Tibial artery (tissue), 4 donors: ENCODE measurements at regions of chr3 and their contacts with region 1.

Region 1: DNA sequence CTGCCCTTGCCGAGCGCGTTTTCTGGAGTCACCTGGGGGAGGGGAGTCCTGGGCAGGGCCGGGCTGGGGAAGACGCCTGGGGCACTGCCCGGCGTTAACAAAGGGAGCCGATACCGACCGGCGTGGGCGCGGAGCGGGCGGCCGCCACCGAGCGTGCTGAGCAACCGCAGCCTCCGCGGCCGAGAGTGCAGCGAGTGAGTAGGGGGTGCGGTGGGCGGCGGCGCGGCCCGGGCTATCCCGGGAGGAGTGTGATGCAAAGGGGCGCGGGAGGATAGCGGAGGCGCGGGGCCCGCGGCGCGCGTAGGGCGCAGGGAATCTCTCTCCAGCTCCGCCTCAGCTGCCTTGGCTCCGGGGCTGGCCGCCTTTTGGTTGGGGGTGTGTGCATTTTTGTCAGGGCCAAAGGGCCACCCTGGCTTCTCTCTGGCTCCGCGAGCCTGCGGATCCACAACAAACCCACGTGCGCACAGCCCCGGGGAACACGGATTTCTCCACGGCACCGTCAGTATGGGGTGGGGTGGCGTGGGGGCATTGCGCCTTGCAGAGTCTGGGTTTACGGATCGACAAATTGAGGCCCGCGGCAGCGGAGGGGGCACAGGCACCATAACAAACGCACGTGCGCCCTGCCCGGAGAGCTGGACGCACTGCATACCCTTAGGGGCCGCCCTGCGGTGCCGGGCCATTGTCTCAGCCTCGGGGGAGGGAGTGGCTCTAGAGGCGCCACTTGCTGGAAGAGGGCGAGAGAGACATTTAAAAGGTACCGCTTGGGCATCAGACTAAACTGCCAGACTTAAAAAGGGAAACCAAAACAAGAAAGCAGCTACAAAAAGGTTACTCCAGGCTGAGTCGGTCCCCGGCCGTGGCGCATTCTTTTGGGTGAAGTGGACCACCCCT is 560 bp downstream of the ST6GAL1 start:
- DNase-seq: peak; percentile 69 to 84
- H3K4me3 ChIP-seq: peak overlapping the region; percentile 82 to 91
- H3K27ac ChIP-seq: peak overlapping the region; percentile 85 to 93
- H3K4me1 ChIP-seq: peaks cover 0 to 32% (median 26%) of the 10 kb centered on the region in 4 donors
- H3K27me3 ChIP-seq: no peaks in the 10 kb centered on the region
- CTCF ChIP-seq: no peak

Region 2: DNA sequence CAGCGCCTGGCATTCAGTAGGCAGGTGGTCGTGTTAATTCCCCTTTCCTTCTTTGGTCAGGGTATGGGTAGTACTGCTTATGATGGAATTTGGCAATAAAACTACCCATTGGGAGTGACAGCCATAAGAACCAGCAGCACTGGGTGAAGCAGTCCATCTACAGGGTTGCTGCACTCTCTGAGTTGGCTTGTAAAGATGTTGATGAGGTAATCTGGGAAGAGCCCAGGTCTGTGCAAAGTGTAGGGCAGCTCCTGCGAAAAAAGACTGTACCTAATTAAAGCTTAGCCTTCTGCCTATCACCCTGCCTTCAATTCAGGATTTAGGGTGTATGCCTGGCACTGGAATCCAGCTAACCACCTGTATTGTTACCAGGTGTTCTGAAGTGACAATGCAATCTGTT is 295.4 kb before region 1 on chr3:
- intact Hi-C with region 1: no loop called
- DNase-seq: no peak
- H3K4me3 ChIP-seq: no peak overlapping the region
- H3K27ac ChIP-seq: no peak overlapping the region
- H3K4me1 ChIP-seq: peaks cover 0 to 6% (median 2%) of the 10 kb centered on the region in 4 donors
- H3K27me3 ChIP-seq: peaks cover 0 to 7% of the 10 kb centered on the region in 2 donors
- CTCF ChIP-seq: no peak

Region 3: GRCh38 chr3:186826976-186827731 is 103.7 kb before region 1 on chr3:
- intact Hi-C with region 1: loop called (anchors 10 kb)
- DNase-seq: peak; percentile 49 to 86
- H3K4me3 ChIP-seq: peak overlapping the region; percentile 65 to 93
- H3K27ac ChIP-seq: peak overlapping the region; percentile 68 to 70
- H3K4me1 ChIP-seq: peaks cover 0 to 18% (median 10%) of the 10 kb centered on the region in 4 donors
- H3K27me3 ChIP-seq: peaks cover 0 to 34% of the 10 kb centered on the region in 2 donors
- CTCF ChIP-seq: peak in 1 of 2 experiments; percentile 16

Region 4: GRCh38 chr3:186976837-186977750 is 46.2 kb after region 1 on chr3:
- intact Hi-C with region 1: loop called (anchors 5 kb)
- DNase-seq: peak; percentile 91 to 96
- H3K4me3 ChIP-seq: peak overlapping the region; percentile 17 to 24
- H3K27ac ChIP-seq: peak overlapping the region; percentile 80 to 88
- H3K4me1 ChIP-seq: peaks cover 4 to 64% (median 51%) of the 10 kb centered on the region in 4 donors
- H3K27me3 ChIP-seq: no peaks in the 10 kb centered on the region
- CTCF ChIP-seq: peak; percentile 28 to 42

Region 5: GRCh38 chr3:187000711-187001151 is 69.8 kb after region 1 on chr3:
- intact Hi-C with region 1: no loop called
- DNase-seq: no peak
- H3K4me3 ChIP-seq: no peak overlapping the region
- H3K27ac ChIP-seq: no peak overlapping the region
- H3K4me1 ChIP-seq: peaks cover 0 to 44% (median 5%) of the 10 kb centered on the region in 4 donors
- H3K27me3 ChIP-seq: no peaks in the 10 kb centered on the region
- CTCF ChIP-seq: no peak

Region 6: DNA sequence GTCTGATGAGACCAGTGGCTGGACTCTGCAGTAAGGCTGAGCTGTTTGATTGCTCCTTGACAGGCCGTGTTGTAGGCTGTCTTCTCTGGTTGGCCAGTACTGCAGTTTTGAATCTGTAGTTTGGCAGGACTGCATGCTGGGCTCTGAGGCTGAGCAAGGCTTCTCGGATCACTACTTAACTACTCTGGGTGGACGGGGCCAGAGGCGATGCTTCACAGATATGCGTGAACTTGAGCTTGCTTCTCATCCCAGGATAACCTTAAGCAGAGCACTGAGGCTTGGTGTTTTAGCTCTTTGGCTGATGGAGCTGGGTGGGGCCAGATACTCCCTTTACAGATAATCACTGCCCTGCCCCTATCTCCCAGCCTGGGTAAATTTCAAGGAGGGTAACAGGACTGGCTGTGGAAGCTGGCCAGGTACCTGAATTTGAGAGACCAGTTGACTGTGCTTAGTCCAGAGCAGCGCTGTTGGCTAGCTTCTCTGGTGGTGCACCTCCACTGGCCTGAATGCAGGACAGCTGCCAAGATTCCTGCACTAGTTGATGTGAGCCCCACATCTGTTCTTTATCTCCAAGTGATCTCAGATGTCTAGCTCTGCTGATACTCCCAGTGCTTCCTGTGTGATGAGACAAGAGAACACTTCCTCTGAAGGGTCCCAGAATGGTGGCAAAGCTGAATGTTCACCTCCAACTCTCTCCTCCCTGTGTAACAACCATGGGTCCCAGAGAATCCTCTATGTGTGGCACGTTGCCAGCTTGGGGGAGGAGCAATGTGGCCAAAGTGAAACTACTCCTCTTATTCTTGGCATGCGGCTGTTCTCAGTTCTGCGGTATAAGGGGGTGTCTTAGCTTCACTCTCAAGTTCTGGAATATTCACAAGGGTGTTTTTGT is 170.5 kb after region 1 on chr3:
- intact Hi-C with region 1: loop called (anchors 10 kb)
- DNase-seq: peak; percentile 75 to 89
- H3K4me3 ChIP-seq: peak overlapping the region; percentile 39 to 45
- H3K27ac ChIP-seq: peak overlapping the region; percentile 84
- H3K4me1 ChIP-seq: peaks cover 0 to 58% (median 36%) of the 10 kb centered on the region in 4 donors
- H3K27me3 ChIP-seq: no peaks in the 10 kb centered on the region
- CTCF ChIP-seq: no peak

Region 7: DNA sequence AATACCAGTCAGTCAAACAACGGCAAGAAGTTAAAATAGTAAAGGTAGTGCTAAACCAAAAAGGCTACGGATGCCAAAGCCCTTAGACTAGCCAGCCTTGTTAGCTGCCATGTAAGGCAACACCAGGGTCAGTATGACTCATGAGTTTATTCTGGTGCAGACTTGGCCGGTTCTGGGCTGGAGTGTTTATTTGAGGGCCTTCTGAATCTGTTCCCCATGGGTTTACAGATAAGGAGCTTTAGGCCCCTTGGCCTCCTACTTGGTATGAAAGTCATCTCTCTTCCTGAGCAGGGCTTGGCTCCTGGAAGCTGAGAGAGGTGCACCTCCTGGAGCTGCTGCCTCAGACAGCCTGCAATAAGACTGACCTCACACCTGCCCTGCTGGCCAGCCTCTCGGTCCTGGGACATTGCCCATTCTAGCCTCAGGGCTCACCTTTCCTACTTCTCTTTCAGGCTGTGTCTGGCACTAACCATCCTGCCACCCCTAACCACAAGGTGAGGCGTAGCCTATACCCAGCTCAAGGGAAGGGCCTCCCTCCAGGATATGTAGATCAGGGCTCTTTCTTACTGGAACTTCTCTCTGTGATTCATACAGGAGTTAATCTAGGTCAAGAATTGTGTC is 256.0 kb after region 1 on chr3:
- intact Hi-C with region 1: loop called (anchors 5 kb)
- DNase-seq: peak; percentile 71 to 90
- H3K4me3 ChIP-seq: no peak overlapping the region
- H3K27ac ChIP-seq: peak overlapping the region; percentile 73 to 91
- H3K4me1 ChIP-seq: peaks cover 0 to 59% (median 41%) of the 10 kb centered on the region in 4 donors
- H3K27me3 ChIP-seq: no peaks in the 10 kb centered on the region
- CTCF ChIP-seq: no peak